GM18951 (cell line): ENCODE measurements at regions of chr4 and their contacts with region 1.

Region 1: GRCh38 chr4:184168406-184169019 is 49.2 kb downstream of the ENPP6 start:
- POLR2A ChIP-seq: no peak

Region 2: DNA sequence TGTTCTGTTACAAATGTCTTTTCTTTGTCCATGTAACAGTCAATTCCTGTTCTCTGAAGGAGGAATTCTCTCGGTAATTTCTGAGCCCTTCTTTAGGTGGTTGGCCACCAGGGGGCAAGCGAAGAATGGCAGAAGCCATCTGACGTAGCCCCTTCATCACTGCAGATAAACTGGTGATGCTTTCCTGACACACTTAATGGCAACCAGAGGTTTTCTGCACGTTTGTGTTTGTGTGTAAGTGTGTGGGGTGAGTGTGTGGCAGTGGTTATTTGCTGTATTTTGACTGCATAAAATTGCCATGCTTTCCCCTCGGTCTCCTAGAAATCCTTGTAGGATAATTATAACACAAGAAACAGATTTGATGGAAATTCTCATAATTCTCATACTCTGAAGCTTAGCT is 328.2 kb before region 1 on chr4:
- in situ Hi-C with region 1: loop called (anchors 25 kb)
- POLR2A ChIP-seq: no peak

Region 3: DNA sequence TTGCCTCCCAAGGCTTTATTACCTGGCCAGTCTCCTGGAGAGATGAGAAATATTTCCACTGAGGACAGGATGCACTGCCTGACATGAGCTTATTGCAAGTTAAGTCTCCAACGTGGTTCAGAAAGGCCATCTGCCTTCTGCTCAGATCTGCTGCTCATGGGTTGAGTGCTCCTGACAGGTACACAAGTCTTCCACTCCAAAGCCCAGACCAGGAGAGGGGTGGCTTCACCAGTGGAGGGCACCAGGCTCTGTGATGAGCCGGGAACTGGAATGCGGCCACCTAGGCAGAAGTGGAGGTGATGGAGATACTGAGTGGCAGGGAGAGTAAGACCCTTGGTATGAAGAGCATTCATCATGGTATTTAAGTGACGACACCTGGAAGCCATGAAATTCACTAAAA is 385.4 kb after region 1 on chr4:
- in situ Hi-C with region 1: no loop called
- POLR2A ChIP-seq: no peak

Region 4: DNA sequence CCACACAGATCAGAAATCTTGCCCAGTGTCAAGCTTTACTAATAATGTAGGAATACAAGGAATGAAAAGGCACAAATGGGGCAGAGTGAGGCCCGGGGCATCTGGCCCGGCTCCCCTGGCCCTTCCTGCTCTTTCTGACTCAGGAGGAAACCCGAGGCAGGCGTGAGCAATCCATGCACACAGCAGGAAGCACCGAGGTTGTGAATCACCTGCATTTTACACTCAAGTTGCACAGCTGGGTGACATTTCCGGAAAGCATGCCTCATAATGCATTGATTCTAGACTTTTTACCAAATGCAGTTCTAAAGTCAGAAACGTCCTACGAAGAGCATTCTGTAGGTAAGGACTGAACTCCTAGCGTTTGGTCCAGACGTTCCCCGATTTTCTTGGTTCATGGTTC is 519.9 kb after region 1 on chr4:
- in situ Hi-C with region 1: no loop called
- POLR2A ChIP-seq: no peak